CD14-positive monocyte (primary cell): ENCODE measurements at regions of chr3 and their contacts with region 1.

Region 1: DNA sequence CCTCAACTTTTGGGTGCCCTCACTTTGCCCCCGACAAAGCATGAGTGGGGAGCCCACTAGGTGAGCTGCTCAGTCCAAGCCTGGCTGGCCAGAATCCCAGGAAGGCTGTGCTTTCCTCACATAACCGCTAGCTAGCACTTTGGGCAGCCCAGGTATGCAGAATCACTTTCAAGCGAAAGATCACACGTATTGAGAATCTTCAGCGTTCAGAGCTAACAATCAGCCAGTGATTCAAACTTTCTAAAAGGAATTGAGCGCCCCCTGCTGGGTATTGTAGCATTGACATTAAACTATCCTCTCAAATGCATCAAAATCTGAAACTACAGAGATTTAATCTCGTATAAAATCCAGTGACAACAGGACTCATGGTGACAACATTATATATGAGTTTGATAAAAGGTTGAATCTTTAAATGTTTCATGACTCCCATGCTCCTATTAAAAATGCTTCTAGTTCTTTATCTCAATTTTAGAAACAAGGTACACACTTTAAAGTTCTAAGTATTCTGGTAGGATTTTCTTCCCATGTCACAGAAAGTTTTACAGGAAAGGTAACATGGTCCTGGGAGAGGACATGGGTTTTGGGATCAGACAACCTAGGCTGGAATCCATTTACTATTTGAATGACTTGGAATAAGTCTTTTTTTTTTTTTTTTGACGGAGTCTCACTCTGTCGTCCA is 11.8 kb downstream of the ANAPC13 start:
- DNase-seq: peak; percentile 34 to 67 (median 51)
- H3K4me3 ChIP-seq: no peak overlapping the region
- H3K4me3 Mint-ChIP-seq: no peak overlapping the region
- H3K27ac ChIP-seq: no peak overlapping the region
- H3K27ac Mint-ChIP-seq: no peak overlapping the region
- H3K4me1 ChIP-seq: no peaks in the 10 kb centered on the region
- H3K4me1 Mint-ChIP-seq: no peaks in the 10 kb centered on the region
- H3K27me3 ChIP-seq: no peaks in the 10 kb centered on the region
- H3K27me3 Mint-ChIP-seq: peaks cover 0 to 3% (median under 1%) of the 10 kb centered on the region in 3 donors
- CTCF ChIP-seq: peak; percentile 80

Region 2: DNA sequence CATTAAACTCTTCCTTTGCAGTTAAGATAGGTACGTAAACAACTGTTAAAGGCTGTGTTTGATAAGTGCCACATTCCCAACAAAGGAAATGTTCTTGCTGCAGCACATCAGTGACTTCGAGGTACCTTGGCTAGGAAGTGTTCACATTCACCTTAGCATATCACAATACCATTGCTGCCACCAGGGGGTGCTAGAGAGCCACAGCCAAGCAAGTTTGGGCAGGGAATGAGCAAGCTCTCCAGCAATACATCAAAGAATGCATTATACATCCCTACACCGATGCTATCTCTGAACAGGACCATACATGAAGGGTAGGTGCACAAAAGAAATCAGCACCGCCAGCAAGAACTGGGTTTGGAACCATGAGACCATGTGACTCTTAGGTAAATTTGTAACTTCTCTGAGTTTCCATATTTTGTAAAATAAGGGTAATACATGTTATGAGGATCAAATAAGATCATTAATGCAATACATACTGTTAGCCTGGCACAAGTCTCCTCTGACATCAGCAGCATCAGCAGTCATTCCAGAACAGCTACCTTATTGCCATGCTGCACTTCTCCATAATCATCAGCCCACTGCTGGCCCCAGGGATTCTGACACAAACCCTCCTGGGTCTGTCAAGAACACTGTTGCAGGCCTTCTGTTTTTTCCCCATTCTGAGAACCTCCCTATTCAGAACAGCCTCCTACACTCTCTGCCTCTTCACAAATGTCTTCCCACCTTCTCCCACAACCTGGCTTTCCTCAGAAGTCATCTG is 260.9 kb before region 1 on chr3:
- intact Hi-C with region 1: loop called (anchors 5 kb)
- DNase-seq: peak; percentile 41 to 57 (median 53)
- H3K4me3 ChIP-seq: no peak overlapping the region
- H3K4me3 Mint-ChIP-seq: no peak overlapping the region
- H3K27ac ChIP-seq: no peak overlapping the region
- H3K27ac Mint-ChIP-seq: no peak overlapping the region
- H3K4me1 ChIP-seq: no peaks in the 10 kb centered on the region
- H3K4me1 Mint-ChIP-seq: peaks cover 2% of the 10 kb centered on the region
- H3K27me3 ChIP-seq: no peaks in the 10 kb centered on the region
- H3K27me3 Mint-ChIP-seq: peaks cover 0 to 1% (median 0%) of the 10 kb centered on the region in 3 donors
- CTCF ChIP-seq: peak; percentile 97

Region 3: GRCh38 chr3:134308350-134308891 is 165.6 kb before region 1 on chr3:
- intact Hi-C with region 1: loop called (anchors 1 to 5 kb)
- DNase-seq: peak; percentile 42 to 66 (median 63)
- H3K4me3 ChIP-seq: no peak overlapping the region
- H3K4me3 Mint-ChIP-seq: no peak overlapping the region
- H3K27ac ChIP-seq: no peak overlapping the region
- H3K27ac Mint-ChIP-seq: no peak overlapping the region
- H3K4me1 ChIP-seq: peaks cover 6 to 10% of the 10 kb centered on the region in 2 donors
- H3K4me1 Mint-ChIP-seq: peaks cover 11% of the 10 kb centered on the region
- H3K27me3 ChIP-seq: peaks cover 5 to 26% of the 10 kb centered on the region in 2 donors
- H3K27me3 Mint-ChIP-seq: peaks cover 21 to 50% (median 34%) of the 10 kb centered on the region in 3 donors
- CTCF ChIP-seq: peak; percentile 98

Region 4: DNA sequence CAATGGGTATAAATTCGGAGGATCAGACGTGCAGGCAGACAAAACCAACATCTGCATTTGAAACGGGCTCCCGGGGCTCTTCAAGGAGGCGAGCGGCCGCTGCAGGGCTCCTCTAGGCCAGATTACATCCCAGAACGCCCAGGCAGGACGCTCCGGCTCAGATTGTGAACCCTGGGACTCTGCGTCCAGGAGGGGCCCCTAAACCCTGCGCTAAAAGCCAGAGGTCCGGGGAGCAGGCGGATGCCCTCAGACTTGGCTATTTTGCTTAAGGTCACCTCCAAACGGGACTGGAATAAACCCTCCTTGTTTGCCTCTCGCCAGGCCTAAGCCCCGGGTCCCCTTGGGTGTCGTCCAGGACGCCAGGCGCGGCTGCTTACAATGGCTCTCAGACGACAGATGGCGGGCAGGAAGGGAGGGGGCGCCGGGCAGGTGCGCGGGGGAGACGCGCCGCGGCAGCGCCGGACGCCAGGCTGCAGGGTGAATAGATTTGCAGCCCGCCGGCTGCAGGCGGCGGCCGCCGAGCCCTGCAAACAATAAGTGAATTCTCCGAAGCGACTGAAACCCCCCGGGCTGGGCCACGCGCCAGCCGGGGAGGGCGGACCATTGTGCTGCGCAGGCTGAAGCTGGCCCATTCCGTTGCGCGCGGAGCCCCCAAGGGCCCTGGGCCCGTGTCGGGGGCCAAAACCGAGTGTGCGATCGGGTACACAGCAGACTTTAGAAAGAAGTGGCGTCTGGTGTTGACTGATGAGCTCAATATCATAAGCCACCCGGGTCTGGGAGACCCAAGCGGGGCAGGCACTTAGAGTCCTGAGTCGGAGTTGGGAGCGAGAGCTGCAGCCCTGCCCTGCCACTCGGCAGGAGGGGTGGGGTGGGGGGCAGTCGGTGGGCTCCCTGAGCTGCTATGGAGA is 67.4 kb before region 1 on chr3:
- intact Hi-C with region 1: no loop called
- DNase-seq: no peak
- H3K4me3 ChIP-seq: no peak overlapping the region
- H3K4me3 Mint-ChIP-seq: peak overlapping the region in 1 of 2 donors; percentile 69
- H3K27ac ChIP-seq: no peak overlapping the region
- H3K27ac Mint-ChIP-seq: no peak overlapping the region
- H3K4me1 ChIP-seq: no peaks in the 10 kb centered on the region
- H3K4me1 Mint-ChIP-seq: no peaks in the 10 kb centered on the region
- H3K27me3 ChIP-seq: peaks cover 24 to 55% of the 10 kb centered on the region in 2 donors
- H3K27me3 Mint-ChIP-seq: peaks cover 37 to 54% (median 41%) of the 10 kb centered on the region in 3 donors
- CTCF ChIP-seq: no peak